ENCODE measurements at regions of chrX and their contacts with region 1.

Region 1: DNA sequence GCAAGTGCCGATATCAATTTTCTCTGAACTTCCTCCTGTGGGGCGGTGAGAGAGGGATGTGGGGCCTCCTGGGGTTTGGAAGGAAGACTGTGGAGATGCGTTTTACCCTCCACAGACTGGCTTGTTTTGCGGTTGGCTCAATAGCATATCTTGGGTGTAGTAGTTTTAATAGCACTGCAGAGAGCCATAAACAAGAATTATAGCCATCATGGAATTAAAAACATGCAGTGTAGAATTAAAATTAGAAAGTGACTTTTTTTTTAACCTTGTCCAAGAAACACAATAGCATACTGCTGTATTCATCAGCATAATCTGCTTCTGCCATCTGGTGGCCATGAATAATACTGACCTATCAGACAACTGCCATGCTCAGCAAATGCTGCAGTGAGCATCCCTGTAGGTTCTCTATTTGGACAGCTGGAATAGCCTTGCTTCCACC is 47.3 kb upstream of the SCML1 start:
- DNase-seq: peak; percentile 47 to 71 (median 59)
- ATAC-seq: peak; percentile 55
- H3K4me3 ChIP-seq: no peak overlapping the region
- H3K27ac ChIP-seq: no peak overlapping the region
- H3K4me1 ChIP-seq: no peaks in the 10 kb centered on the region
- H3K27me3 ChIP-seq: no peaks in the 10 kb centered on the region
- CTCF ChIP-seq: peak; percentile 33 to 78 (median 56)
- POLR2A ChIP-seq: no peak

Region 2: DNA sequence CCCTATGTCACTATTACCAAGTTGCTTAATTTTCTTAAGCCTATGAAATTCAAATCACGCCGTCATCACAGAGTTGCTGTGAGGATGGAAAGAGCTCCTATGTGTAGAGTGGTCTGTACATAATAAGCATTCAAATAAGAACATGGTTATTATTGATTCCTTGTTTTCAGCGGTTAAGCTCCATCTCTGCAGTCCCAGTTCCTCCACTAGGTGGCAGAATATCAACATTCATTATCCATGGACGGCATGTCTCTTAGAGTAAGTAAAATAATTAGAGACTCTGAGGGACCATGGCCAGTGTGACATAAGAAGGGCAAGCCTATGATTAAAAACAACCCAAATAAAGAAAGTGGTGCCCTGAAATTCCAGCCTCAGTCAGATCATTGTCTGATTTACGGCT is 447.5 kb before region 1 on chrX:
- intact Hi-C with region 1: loop called (anchors 10 kb)
- DNase-seq: peak; percentile 39 to 51 (median 44)
- ATAC-seq: no peak
- H3K4me3 ChIP-seq: no peak overlapping the region
- H3K27ac ChIP-seq: no peak overlapping the region
- H3K4me1 ChIP-seq: no peaks in the 10 kb centered on the region
- H3K27me3 ChIP-seq: no peaks in the 10 kb centered on the region
- CTCF ChIP-seq: peak; percentile 45 to 73 (median 60)
- POLR2A ChIP-seq: no peak